Dorsolateral prefrontal cortex (tissue), 120 donors: ENCODE measurements at regions of chr2 and their contacts with region 1.

Region 1: DNA sequence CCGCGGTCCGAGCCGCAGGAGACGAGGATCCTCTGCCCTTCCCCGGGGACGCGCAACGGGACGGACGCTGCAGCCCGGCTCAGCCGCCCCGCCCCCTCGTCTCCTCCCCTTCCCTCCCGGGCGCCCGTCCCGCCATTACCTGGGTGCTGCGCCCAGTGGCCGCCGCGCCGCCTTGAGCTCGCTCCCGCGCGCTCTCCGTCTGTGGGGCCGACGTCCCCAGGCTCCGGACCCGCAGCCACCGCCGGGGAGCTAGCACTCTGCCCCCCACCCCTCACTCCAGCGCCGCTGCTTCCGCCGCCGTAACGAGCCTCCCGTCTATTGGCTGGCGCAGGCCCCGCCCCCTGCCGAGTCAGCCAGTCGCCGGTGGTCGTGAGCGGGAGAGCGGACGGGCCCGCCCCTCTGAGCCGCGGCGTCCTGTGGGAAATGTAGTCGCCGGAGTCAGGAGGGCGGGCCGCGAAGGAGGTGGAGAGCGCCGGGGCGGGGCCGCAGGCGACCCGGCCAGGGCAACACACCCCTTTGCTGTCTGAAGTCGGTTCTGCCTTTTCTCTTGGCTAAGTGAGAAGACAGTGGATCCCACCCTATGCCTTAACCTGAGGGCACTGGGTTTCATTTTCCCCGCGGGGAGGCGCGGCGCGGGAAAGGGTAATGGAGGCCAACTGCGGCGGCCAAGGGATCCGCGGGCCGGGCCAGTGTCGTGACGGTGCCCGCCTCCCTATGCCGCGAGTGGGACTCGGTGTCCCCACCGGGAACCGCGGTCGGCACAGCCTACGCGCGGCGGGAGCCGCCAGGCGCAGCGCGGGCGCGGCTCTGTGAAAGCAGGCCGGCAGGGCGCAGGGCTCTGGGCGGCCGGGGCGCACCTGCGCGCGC is at the start of gene SAP130:
- DNase-seq: peak; percentile 96 to 99 (median 98)
- H3K4me3 ChIP-seq: peak within 1 kb of the TSS; percentile 72 to 98 (median 92)
- H3K27ac ChIP-seq: peak within 1 kb of the TSS; percentile 70 to 98 (median 95)
- H3K27me3 ChIP-seq: no peaks in the 10 kb centered on the region
- CTCF ChIP-seq: peak in 24 of 56 donors; percentile 5 to 38 (median 21)
- total RNA-seq, gene SAP130: 19.5 to 34.2 (median 27.2) TPM

Region 2: GRCh38 chr2:127701193-127701650 is 326.8 kb before region 1 on chr2 and contains the start of gene SFT2D3:
- intact Hi-C with region 1: loop called (anchors 5 to 10 kb)
- DNase-seq: peak; percentile 81 to 95 (median 91)
- H3K4me3 ChIP-seq: peak within 1 kb of the TSS; percentile 55 to 96 (median 74)
- H3K27ac ChIP-seq: peak within 1 kb of the TSS; percentile 78 to 99 (median 94)
- H3K27me3 ChIP-seq: no peaks in the 10 kb centered on the region
- CTCF ChIP-seq: peak in 19 of 56 donors; percentile 11 to 49 (median 24)
- total RNA-seq, gene SFT2D3: 1.3 to 5.3 (median 3.1) TPM

Region 3: GRCh38 chr2:127884436-127885345 is 143.3 kb before region 1 on chr2:
- intact Hi-C with region 1: loop called (anchors 5 kb)
- DNase-seq: no peak
- H3K4me3 ChIP-seq: peak overlapping the region; percentile 31 to 80 (median 71)
- H3K27ac ChIP-seq: peak overlapping the region in 25 of 59 donors; percentile 22 to 96 (median 58)
- H3K27me3 ChIP-seq: no peaks in the 10 kb centered on the region
- CTCF ChIP-seq: no peak

Region 4: DNA sequence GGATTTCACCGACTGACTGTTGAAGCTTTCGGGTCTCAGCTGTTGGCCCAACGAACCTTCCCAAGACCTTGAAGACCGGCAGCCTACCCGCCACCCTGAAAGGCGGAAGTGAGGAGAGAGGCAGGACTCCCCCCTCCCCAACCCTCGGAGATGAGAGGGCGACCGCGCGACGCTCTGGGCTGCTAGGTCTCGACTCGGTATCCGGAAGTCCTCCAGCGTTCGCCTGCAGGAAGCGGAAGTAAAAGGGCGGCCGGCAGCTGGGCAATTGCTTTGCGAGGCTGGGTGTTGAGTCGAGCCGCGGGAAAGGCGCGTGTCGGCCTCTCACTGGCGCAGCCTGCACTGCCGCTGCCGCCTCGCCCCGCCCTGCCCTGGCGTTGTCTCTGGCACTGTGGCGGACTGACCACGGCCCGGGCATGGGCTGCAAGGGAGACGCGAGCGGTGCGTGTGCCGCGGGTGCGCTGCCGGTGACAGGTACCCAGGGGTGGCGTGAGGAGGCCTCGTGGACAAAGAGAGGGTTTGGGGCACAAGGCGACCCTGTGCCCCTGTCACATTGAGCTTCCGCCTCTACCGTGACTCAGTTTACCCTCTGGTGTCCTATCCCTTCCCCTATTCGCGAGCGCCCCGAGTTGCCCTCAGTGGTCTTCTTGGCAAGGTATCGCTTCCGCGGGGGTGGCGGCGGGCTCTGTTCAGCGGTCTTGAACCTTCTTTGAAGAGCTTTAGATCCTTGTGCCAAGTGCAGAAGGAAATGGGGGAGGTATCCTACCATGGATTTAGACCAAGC is 63.1 kb after region 1 on chr2 and contains the start of gene UGGT1:
- intact Hi-C with region 1: loop called (anchors 5 kb)
- DNase-seq: peak; percentile 89 to 97 (median 94)
- H3K4me3 ChIP-seq: peak within 1 kb of the TSS; percentile 60 to 100 (median 94)
- H3K27ac ChIP-seq: peak within 1 kb of the TSS; percentile 13 to 93 (median 80)
- H3K27me3 ChIP-seq: no peaks in the 10 kb centered on the region
- CTCF ChIP-seq: peak in 38 of 56 donors; percentile 9 to 57 (median 34)
- total RNA-seq, gene UGGT1: 23.5 to 46.5 (median 33.1) TPM